HEK293 (cell line): ENCODE measurements at regions of chr17 and their contacts with region 1.

Region 1: DNA sequence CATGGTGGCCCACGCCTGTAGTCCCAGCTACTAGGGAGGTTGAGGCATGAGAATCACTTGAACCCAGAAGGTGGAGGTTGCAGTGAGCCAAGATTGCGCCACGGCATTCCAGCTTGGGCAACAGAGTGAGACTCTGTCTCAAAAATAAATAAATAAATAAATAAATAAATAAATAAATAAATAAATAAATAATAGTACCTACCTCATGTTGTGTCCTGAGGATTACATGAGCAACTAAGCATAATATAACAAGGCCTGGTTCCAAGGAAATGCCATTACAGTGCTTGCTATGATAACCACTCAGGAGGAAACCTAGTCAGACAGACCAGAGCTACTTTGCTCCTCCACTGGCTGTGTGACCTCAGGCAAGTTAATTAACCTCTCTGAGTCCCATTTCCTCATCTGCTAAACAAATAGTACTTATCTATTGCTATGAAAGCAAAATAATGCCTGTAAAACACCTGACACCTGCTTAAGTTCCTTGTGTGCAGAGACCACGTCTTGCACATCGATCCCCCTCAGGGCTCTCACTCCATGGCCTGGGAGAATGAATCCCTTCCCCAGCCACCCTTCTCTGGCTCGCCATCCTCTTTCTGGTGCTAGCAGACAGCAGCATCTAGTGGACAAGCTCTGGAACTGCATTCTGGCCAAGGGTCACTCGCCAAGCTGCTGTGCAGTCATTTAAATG is 7.5 kb downstream of the EPOP start:
- H3K4me3 ChIP-seq: no peak overlapping the region
- H3K27ac ChIP-seq: no peak overlapping the region
- H3K4me1 ChIP-seq: peaks cover 4% of the 10 kb centered on the region; the same call in 1 of the 2 replicates
- CTCF ChIP-seq: peak; percentile 88

Region 2: GRCh38 chr17:38421171-38421841 is 245.9 kb before region 1 on chr17:
- CTCF ChIA-PET with region 1: interaction called, 30 read pairs
- POLR2A ChIA-PET with region 1: interaction called, 3 read pairs
- H3K4me3 ChIP-seq: no peak overlapping the region
- H3K27ac ChIP-seq: no peak overlapping the region
- H3K4me1 ChIP-seq: no peaks in the 10 kb centered on the region; the same call in 1 of the 2 replicates
- CTCF ChIP-seq: no peak

Region 3: DNA sequence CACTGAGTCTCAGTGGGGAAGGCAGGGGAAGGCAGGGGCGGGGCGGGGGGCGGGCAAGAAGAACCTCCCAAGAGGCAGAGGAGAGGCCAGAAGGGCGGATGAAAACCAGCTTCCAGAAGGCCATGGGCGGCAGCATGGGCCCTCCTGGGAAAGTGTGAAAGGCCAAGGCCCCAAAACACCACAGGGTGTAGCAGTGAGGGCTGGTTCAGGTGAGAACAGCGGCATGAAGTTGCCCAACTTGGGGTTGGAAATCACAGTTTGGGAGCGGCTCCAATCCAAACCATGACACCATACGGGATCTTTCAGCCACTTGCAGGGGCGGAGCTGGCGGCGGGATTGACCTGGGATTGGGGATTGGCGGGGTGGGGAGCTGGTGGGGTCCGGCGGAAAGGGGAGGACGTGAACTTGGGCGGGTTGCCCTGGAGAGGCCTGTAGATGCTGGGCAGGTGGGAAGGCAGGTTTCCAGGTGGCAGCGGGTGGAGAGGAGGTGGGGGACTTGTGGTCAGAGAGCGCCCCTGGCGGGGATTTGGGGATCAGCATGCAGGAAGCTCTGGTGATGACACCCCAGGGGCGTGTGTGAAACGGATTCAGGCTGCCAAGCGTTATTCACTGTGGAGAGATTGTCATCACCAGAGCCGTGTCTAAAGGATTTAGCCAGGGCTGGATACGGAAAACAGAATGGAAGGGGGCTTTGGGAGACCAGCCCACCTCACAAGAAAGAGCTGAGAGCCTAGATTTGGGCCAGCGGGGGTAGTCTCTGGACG is 158.1 kb before region 1 on chr17:
- CTCF ChIA-PET with region 1: interaction called, 128 read pairs
- POLR2A ChIA-PET with region 1: no interaction called
- H3K4me3 ChIP-seq: no peak overlapping the region
- H3K27ac ChIP-seq: no peak overlapping the region
- H3K4me1 ChIP-seq: no peaks in the 10 kb centered on the region
- CTCF ChIP-seq: peak; percentile 62

Region 4: GRCh38 chr17:38584350-38584925 is 82.8 kb before region 1 on chr17:
- CTCF ChIA-PET with region 1: interaction called, 128 read pairs
- POLR2A ChIA-PET with region 1: no interaction called
- H3K4me3 ChIP-seq: peak overlapping the region; percentile 21
- H3K27ac ChIP-seq: no peak overlapping the region
- H3K4me1 ChIP-seq: peaks cover 16% of the 10 kb centered on the region
- CTCF ChIP-seq: peak; percentile 86

Region 5: DNA sequence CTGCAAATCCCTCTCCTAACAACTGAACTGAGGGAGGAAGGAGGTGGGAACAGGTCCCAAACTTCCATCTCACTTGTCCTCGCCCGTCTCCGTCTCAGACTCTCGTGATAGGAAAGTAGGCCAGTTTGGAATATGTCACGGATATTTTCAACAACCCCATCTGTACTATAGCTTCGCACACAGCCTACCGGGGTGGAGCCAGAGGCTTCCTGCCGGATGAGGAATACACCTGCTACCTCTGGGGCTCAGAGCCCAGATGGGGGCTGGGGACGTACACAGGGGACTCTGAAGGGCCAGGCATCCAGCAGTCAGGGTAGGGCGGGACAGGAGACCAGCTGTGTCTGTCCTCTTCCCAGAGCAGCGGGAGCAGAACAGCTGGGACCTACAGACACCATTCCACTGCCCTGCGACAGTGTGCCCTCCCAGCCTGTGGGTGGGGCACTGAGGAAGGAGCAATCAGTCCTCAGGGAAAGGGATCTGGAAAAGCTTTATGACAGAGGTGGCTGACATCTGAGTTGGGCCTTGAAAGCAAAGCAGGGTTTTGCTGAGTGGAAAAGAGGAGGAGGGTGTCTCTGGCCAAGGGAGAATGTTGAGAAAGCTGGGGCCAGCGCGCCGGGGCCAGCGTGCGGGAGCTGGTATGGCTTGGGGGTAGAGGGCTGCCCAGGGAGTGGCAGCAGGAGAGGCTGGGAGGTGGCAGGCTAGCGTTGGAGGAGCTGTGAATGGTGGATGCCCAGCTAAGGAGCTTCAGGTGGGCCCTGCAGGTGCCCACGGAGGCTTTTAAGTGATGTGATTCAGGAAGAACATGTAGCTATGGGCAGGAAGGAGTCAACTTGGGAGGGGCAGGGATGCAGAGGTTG is 50.0 kb before region 1 on chr17:
- CTCF ChIA-PET with region 1: interaction called, 11 read pairs
- POLR2A ChIA-PET with region 1: interaction called, 4 read pairs
- H3K4me3 ChIP-seq: no peak overlapping the region
- H3K27ac ChIP-seq: no peak overlapping the region
- H3K4me1 ChIP-seq: no peaks in the 10 kb centered on the region
- CTCF ChIP-seq: no peak

Region 6: DNA sequence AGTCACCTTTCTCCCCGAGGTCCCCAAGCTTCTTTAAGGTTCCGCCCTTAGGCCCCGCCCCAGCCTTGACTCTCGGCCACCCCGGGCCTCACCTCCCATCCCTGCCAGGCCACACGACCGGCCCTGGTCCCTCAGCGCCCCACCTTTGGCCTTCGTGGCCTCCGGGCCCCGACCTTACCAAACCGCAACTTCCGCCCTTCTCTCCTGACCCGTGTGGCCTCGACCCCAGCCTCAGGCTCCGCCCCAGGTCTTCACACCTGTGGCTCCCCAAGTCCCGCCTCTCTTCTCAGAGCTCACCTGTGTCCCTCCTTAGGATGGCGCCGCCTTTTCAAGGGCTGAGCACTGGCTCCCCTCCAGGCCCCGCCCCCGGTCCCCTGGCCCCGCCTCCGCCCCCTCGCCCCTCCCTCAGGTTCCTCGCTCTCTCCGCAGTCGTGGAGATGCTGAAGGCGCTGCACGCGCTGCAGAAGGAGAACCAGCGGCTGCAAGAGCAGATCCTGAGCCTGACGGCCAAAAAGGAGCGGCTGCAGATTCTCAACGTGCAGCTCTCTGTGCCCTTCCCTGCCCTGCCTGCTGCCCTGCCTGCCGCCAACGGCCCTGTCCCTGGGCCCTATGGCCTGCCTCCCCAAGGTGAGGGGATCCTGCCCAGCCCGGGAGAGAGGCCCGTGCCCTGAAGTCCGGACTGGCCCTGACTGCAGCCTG is 52.8 kb after region 1 on chr17:
- CTCF ChIA-PET with region 1: no interaction called
- POLR2A ChIA-PET with region 1: no interaction called
- H3K4me3 ChIP-seq: no peak overlapping the region
- H3K27ac ChIP-seq: no peak overlapping the region
- H3K4me1 ChIP-seq: no peaks in the 10 kb centered on the region
- CTCF ChIP-seq: no peak

Region 7: GRCh38 chr17:38735161-38735997 is 68.1 kb after region 1 on chr17:
- CTCF ChIA-PET with region 1: interaction called, 15 read pairs
- POLR2A ChIA-PET with region 1: interaction called, 3 read pairs
- H3K4me3 ChIP-seq: no peak overlapping the region
- H3K27ac ChIP-seq: no peak overlapping the region
- H3K4me1 ChIP-seq: peaks cover 5% of the 10 kb centered on the region
- CTCF ChIP-seq: peak; percentile 92